GM13976 (cell line): ENCODE measurements at regions of chr10 and their contacts with region 1.

Region 1: GRCh38 chr10:68992636-68993440 is 4.2 kb downstream of the KIFBP start:
- DNase-seq: no peak
- CTCF ChIP-seq: no peak

Region 2: DNA sequence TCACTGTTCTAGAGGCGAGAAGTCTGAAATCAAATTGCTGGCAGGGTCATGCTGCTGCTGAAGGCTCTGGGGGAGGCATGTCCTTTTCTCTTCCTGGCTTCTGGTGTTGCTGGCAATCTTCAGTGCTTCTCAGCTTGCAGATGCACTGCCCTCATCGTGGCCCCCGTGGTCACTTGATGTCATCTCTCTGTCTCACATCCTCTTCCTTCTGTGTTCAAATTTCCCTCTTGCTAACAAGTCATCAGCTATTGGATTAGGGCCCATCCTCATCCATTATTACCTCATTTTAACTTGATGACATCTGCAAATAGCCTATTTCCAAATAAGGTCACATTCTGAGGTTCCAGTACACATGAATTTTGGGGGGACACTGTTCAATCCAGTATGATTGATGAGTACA is 58.5 kb after region 1 on chr10:
- in situ Hi-C with region 1: no loop called
- DNase-seq: peak; percentile 76
- CTCF ChIP-seq: no peak

Region 3: DNA sequence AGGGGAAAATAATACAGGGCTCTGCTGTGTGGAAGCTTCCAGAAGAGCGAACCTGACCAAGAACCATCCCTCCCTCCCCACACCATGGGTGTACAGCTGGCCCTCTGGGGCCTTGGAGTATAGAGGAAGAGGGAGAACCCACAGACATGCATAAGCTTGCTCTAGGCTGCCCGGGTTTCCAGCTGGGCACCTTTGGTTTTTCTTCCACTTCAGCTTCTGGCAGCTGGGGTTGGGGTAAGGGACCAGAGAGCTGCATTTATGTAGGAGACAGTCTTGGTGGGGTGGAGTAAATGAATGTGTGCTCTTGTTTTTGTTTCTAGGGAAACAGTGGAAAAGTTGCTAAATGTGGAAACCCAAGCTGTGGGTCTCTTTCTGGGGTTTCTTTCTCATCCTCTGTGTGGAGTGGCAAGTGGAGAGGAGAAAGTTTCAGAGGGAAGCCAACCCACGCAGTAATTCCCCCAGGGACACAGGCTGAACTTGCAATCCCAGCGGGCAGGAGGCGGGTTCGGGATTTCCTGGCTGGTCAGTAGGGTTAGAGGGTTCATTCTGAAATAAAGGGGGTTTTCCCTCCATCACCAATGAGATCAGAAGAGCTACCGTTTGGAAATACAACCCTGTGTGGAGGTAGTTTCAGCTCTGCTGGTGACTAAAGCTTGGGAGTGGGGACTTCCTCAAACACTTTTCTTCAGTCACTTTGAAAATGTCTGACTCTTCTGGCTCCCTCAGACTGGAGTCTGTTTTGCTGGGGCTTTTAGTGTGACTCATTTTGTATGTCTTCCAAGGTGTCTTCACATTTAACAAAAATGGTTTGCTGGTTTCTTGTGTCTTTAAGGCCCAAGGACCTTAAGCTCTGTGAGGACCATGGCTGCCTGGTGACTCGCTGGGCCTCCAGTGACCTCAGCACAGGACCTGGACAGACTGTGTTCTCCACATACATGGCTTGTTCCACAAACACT is 72.8 kb after region 1 on chr10:
- in situ Hi-C with region 1: no loop called
- DNase-seq: peak; percentile 68
- CTCF ChIP-seq: no peak

Region 4: GRCh38 chr10:69222157-69223027 is 229.6 kb after region 1 on chr10:
- in situ Hi-C with region 1: loop called (anchors 10 kb)
- DNase-seq: peak; percentile 85
- CTCF ChIP-seq: peak; percentile 47